ENCODE measurements at regions of chr7 and their contacts with region 1.

Region 1: DNA sequence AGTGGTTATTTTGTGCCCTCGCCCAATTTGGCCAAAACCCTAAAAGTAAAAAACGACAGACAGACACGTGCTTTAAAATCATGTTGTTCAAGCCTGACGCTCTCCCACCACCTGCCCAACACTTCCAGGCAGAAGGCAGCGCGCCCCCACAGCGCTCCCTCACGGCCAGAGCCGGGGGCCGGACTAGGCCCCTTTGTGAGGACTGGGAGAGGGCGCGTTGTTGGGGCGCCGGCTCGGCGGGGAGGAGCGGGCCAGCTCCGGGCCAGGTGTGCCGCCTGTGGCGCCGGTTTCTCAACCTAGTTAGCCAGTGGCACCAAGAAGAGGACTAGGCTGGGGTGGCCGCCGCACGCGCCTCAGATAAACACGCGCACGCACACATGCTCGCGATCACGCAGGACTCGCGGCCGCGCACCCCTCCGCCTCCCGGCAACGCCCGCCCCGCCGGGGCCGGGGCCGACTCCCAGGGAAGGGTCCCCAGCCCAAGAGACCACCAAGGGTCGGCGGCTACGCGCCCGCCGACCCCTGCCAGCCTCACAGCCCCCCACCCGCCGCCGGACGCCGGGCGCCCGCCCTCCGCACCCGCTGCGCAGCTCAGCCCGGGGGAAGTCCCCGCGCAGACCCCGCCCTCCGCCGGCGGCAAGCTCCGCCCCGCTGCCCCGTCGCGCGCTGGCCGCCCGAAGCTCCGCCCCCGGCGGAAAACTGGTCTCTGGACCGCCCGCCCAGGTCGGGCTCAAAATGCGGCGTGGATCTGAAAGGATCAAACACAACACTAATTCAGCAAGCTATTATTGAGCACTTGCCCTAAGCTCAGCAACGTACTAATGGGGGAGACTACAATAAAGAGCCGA is at the start of gene IMMP2L:
- DNase-seq: peak; percentile 82 to 95 (median 90)
- ATAC-seq: peak; percentile 95
- H3K4me3 ChIP-seq: peak within 1 kb of the TSS; percentile 61 to 85
- H3K4me3 Mint-ChIP-seq: peak within 1 kb of the TSS; percentile 92
- H3K27ac ChIP-seq: peak within 1 kb of the TSS; percentile 77 to 82
- H3K27ac Mint-ChIP-seq: peak within 1 kb of the TSS; percentile 96
- H3K4me1 ChIP-seq: peaks cover 18% of the 10 kb centered on the region
- H3K4me1 Mint-ChIP-seq: peaks cover 43% of the 10 kb centered on the region
- H3K27me3 ChIP-seq: no peaks in the 10 kb centered on the region
- H3K27me3 Mint-ChIP-seq: peaks cover 3% of the 10 kb centered on the region
- CTCF ChIP-seq: peak; percentile 15
- total RNA-seq, gene IMMP2L: 9.8 to 12.7 TPM

Region 2: GRCh38 chr7:111089822-111090426 is 472.2 kb before region 1 on chr7:
- CTCF ChIA-PET with region 1: no interaction called
- POLR2A ChIA-PET with region 1: no interaction called
- intact Hi-C with region 1: loop called (anchors 10 kb)
- DNase-seq: peak in 2 of 9 experiments; percentile 57 to 73
- ATAC-seq: peak; percentile 54
- H3K4me3 ChIP-seq: no peak overlapping the region
- H3K4me3 Mint-ChIP-seq: peak overlapping the region; percentile 49
- H3K27ac ChIP-seq: no peak overlapping the region
- H3K27ac Mint-ChIP-seq: peak overlapping the region; percentile 94
- H3K4me1 ChIP-seq: peaks cover 30% of the 10 kb centered on the region
- H3K4me1 Mint-ChIP-seq: peaks cover 43% of the 10 kb centered on the region
- H3K27me3 ChIP-seq: no peaks in the 10 kb centered on the region
- H3K27me3 Mint-ChIP-seq: no peaks in the 10 kb centered on the region
- CTCF ChIP-seq: peak; percentile 92

Region 3: DNA sequence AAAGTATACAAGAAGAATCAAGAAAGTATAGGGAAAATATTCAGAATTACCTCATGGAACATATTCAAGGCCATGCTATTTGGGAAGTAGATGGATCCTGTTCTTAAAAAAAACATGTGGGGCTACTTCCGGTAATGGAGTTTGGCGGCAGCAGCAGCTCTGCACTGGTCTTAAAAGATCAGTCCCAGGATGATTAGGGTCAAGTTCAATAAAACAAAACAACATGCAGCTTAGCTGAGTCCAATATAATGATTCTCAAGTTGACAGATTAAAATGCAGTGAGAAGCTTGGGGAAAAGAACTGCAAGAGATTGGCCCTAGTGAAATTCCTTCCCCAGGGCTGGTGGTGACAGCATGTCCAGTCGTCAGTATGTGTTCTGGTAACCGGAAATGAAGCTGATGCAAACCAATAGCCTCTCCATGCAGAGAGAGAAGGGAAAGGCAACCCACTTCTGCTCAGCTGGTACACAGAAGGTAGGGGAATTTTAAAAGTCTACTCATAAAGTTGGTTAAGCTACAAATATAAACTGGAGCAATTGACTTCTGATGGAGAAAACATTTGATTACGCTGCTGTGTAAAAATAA is 305.3 kb after region 1 on chr7:
- CTCF ChIA-PET with region 1: no interaction called
- POLR2A ChIA-PET with region 1: no interaction called
- intact Hi-C with region 1: no loop called
- DNase-seq: no peak
- ATAC-seq: no peak
- H3K4me3 ChIP-seq: no peak overlapping the region
- H3K4me3 Mint-ChIP-seq: no peak overlapping the region
- H3K27ac ChIP-seq: no peak overlapping the region
- H3K27ac Mint-ChIP-seq: no peak overlapping the region
- H3K4me1 ChIP-seq: no peaks in the 10 kb centered on the region
- H3K4me1 Mint-ChIP-seq: no peaks in the 10 kb centered on the region
- H3K27me3 ChIP-seq: no peaks in the 10 kb centered on the region
- H3K27me3 Mint-ChIP-seq: no peaks in the 10 kb centered on the region
- CTCF ChIP-seq: no peak

Region 4: DNA sequence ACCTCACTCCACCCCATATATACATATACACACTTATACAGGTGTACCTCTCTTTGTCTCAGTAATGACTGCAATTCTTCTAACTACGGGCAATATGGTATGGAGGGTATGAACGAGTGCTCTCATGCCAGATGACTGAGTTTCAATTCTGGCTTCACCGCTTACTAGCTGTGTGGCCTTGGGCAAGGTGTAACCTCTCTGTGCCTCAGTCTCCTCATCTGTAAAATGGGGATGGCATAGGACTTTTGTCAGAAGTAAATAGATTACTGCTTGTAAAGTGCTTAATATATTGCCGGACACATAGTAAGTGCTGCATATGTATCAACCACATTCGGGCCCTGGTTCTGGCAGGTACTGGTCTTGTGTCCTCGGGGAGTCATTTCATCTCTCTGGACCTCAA is 828.1 kb after region 1 on chr7:
- CTCF ChIA-PET with region 1: no interaction called
- POLR2A ChIA-PET with region 1: no interaction called
- intact Hi-C with region 1: loop called in 1 of 2 experiments (anchors 5 kb)
- DNase-seq: no peak
- ATAC-seq: no peak
- H3K4me3 ChIP-seq: no peak overlapping the region
- H3K4me3 Mint-ChIP-seq: peak overlapping the region; percentile 6
- H3K27ac ChIP-seq: no peak overlapping the region
- H3K27ac Mint-ChIP-seq: no peak overlapping the region
- H3K4me1 ChIP-seq: peaks cover 7% of the 10 kb centered on the region
- H3K4me1 Mint-ChIP-seq: peaks cover 12% of the 10 kb centered on the region
- H3K27me3 ChIP-seq: no peaks in the 10 kb centered on the region
- H3K27me3 Mint-ChIP-seq: peaks cover 3% of the 10 kb centered on the region
- CTCF ChIP-seq: no peak

Region 5: GRCh38 chr7:112939574-112940314 is 1377.6 kb after region 1 on chr7:
- CTCF ChIA-PET with region 1: no interaction called
- POLR2A ChIA-PET with region 1: interaction called, 3 read pairs
- intact Hi-C with region 1: loop called in 1 of 2 experiments (anchors 5 kb)
- DNase-seq: peak; percentile 98 to 100 (median 99)
- ATAC-seq: peak; percentile 94
- H3K4me3 ChIP-seq: peak overlapping the region; percentile 76 to 89
- H3K4me3 Mint-ChIP-seq: peak overlapping the region; percentile 93
- H3K27ac ChIP-seq: peak overlapping the region; percentile 75
- H3K27ac Mint-ChIP-seq: peak overlapping the region; percentile 92
- H3K4me1 ChIP-seq: peaks cover 27% of the 10 kb centered on the region
- H3K4me1 Mint-ChIP-seq: peaks cover 42% of the 10 kb centered on the region
- H3K27me3 ChIP-seq: no peaks in the 10 kb centered on the region
- H3K27me3 Mint-ChIP-seq: no peaks in the 10 kb centered on the region
- CTCF ChIP-seq: no peak

Region 6: DNA sequence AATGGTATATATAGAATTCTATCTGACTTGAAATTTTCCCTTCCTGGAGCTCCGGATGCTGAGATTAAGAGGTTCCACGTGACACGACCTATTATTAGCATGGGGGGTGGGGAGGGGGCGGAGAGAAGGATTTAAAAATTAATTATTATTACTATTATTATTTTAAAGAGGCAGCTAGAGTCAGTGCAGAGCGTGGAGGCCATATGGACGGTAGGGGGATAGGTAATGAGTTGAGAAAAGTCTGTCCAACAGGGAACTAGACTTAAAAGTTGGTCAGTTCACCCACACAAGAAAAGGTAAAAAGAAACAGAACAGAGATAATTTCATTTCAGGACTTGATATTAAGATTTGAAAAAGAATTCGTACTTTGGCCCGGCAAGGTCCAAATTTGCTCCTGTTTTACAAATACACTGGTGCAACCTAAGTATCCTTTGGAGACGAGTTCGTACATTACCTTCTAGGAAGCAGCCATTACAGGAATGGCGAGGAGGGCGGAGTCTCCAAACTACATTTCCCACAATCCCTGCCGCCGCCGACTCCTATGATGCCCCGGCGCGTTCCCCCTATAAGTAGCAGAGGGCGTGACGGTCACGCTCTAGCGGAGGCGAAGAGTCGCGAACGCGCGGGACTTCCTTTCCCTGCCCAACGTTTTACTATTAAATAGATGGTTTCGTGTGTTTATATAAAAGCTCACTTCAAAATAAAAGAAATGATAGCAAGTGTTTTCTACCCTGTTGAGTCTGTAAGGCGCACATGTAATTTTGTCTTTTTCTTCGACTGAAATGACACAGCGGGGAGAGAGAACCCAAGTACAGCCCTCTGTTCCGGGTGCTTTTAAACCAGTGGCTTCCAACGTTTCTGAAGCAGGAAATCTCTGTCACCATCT is 1556.2 kb after region 1 on chr7 and contains the start of gene SMIM30:
- CTCF ChIA-PET with region 1: no interaction called
- POLR2A ChIA-PET with region 1: no interaction called
- intact Hi-C with region 1: loop called (anchors 5 kb)
- DNase-seq: peak; percentile 76 to 93 (median 90)
- ATAC-seq: peak; percentile 100
- H3K4me3 ChIP-seq: peak within 1 kb of the TSS; percentile 58 to 66
- H3K4me3 Mint-ChIP-seq: peak within 1 kb of the TSS; percentile 96
- H3K27ac ChIP-seq: peak within 1 kb of the TSS; percentile 55 to 73
- H3K27ac Mint-ChIP-seq: peak within 1 kb of the TSS; percentile 98
- H3K4me1 ChIP-seq: peaks cover 6% of the 10 kb centered on the region
- H3K4me1 Mint-ChIP-seq: peaks cover 21% of the 10 kb centered on the region
- H3K27me3 ChIP-seq: no peaks in the 10 kb centered on the region
- H3K27me3 Mint-ChIP-seq: no peaks in the 10 kb centered on the region
- CTCF ChIP-seq: no peak
- total RNA-seq, gene SMIM30: 3.5 to 4.8 TPM